MCF 10A (cell line): ENCODE measurements at regions of chr11 and their contacts with region 1.

Region 1: GRCh38 chr11:46826310-46827044 is 19.6 kb downstream of the CKAP5 start:
- DNase-seq: peak; percentile 70
- H3K4me3 Mint-ChIP-seq: peak overlapping the region; percentile 88
- H3K27ac Mint-ChIP-seq: peak overlapping the region; percentile 82
- H3K4me1 Mint-ChIP-seq: peaks cover 19% of the 10 kb centered on the region
- H3K27me3 Mint-ChIP-seq: no peaks in the 10 kb centered on the region
- CTCF ChIP-seq: no peak

Region 2: GRCh38 chr11:46686886-46687795 is 139.3 kb before region 1 on chr11:
- CTCF ChIA-PET with region 1: no interaction called
- POLR2A ChIA-PET with region 1: interaction called, 10 read pairs
- intact Hi-C with region 1: no loop called
- DNase-seq: peak; percentile 95
- H3K4me3 Mint-ChIP-seq: peak overlapping the region; percentile 49
- H3K27ac Mint-ChIP-seq: peak overlapping the region; percentile 96
- H3K4me1 Mint-ChIP-seq: peaks cover 33% of the 10 kb centered on the region
- H3K27me3 Mint-ChIP-seq: no peaks in the 10 kb centered on the region
- CTCF ChIP-seq: no peak

Region 3: DNA sequence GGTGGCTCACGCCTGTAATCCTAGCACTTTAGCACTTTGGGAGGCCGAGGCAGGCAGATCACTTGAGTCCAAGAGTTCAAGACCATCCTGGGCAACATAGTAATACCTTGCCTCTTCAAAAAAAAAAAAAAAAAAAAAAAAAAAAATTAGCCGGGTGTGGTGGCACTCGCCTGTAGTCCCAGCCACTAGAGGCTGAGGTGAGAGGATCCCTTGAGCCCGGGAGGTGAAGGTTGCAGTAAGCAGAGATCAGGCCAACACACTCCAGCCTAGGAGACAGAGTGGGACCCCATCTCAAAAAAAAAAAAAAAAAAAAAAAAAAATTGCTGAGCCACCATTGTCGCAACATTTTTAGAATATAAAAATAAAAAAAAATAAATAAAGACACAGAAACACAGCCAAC is 12.0 kb after region 1 on chr11:
- CTCF ChIA-PET with region 1: interaction called, 4 read pairs
- POLR2A ChIA-PET with region 1: interaction called, 74 read pairs
- intact Hi-C with region 1: no loop called
- DNase-seq: no peak
- H3K4me3 Mint-ChIP-seq: no peak overlapping the region
- H3K27ac Mint-ChIP-seq: no peak overlapping the region
- H3K4me1 Mint-ChIP-seq: peaks cover 8% of the 10 kb centered on the region
- H3K27me3 Mint-ChIP-seq: no peaks in the 10 kb centered on the region
- CTCF ChIP-seq: no peak

Region 4: GRCh38 chr11:46845740-46846509 is 19.4 kb after region 1 on chr11 and contains the start of gene CKAP5:
- CTCF ChIA-PET with region 1: interaction called, 5 read pairs
- POLR2A ChIA-PET with region 1: interaction called, 74 read pairs
- intact Hi-C with region 1: no loop called
- DNase-seq: peak; percentile 92
- H3K4me3 Mint-ChIP-seq: peak within 1 kb of the TSS; percentile 89
- H3K27ac Mint-ChIP-seq: peak within 1 kb of the TSS; percentile 91
- H3K4me1 Mint-ChIP-seq: peaks cover 17% of the 10 kb centered on the region
- H3K27me3 Mint-ChIP-seq: no peaks in the 10 kb centered on the region
- CTCF ChIP-seq: no peak
- total RNA-seq, gene CKAP5: 170 and 193 TPM in 2 replicates

Region 5: DNA sequence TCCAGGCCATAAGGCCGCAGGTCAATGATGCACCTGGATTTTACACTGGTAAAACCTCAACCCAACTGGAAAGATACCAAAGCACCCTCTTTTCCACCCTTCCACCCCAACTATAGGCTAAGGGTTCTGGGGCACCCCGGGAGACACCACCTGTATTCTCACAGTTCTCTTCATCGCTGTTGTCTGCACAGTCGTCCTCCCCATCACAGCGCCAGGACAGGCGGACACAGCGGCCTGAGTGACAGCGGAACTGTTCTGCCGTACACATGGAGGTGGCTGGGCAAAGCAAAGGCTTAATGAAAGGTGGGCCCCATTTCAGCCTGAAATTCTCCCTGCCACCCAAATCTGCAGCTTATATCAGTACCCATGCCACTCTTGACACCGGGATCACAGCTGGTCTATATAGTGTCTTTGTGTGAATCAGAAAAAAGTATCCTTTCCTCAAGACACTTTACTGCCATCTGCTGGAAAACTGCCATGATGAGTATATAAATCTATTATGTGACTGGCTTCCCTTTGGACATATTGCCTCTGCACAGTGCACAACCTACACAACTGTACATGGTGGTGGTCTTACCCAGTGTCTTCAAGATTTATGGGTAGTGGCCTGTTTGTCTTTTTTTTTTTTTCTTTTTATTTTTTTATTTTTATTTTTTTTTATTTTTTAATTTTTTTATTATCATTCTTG is 70.4 kb after region 1 on chr11:
- CTCF ChIA-PET with region 1: no interaction called
- POLR2A ChIA-PET with region 1: no interaction called
- intact Hi-C with region 1: no loop called
- DNase-seq: peak; percentile 73
- H3K4me3 Mint-ChIP-seq: no peak overlapping the region
- H3K27ac Mint-ChIP-seq: no peak overlapping the region
- H3K4me1 Mint-ChIP-seq: peaks cover 12% of the 10 kb centered on the region
- H3K27me3 Mint-ChIP-seq: no peaks in the 10 kb centered on the region
- CTCF ChIP-seq: peak; percentile 9